Right ventricle myocardium superior (tissue), 1 donor: ENCODE measurements at regions of chr6 and their contacts with region 1.

Region 1: DNA sequence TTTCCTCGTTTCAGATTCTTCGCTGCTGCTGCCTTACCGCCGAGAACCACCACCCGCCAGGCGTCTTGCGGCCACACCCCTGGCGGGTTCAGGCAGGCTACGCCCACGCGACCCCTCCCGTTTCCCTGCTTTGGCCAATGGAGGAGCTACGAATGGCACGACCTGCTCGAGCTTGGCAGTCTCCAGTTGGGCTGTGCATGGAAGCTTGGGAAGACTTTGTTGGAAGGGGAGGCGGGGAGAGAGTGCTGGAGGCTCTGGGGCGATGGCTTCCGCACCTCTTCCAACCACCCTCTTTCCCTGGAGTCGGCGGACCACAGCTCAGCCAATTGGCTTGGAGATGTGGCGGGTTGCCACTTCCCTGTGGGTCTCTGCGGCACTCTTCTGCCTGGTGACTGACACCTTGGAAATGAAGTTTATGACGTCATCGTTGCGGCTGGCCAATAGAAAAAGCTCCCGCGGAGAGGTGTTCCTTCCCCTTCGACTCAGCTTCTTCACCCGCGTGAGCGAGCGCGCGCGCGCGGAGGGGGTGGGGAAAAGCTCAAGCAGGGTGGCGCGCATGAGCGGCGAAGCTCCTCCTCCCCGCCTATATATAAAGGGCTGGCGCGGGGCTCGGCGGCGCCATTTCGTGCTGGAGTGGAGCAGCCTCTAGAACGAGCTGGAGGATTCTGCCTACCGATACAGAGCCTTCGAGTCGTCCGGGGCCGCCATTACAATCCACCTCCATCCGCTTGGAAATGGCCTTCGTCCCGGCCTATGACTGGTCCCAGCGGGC is 3.4 kb downstream of the BRD2 start:
- DNase-seq: peak; percentile 99
- ATAC-seq: peak; percentile 61

Region 2: DNA sequence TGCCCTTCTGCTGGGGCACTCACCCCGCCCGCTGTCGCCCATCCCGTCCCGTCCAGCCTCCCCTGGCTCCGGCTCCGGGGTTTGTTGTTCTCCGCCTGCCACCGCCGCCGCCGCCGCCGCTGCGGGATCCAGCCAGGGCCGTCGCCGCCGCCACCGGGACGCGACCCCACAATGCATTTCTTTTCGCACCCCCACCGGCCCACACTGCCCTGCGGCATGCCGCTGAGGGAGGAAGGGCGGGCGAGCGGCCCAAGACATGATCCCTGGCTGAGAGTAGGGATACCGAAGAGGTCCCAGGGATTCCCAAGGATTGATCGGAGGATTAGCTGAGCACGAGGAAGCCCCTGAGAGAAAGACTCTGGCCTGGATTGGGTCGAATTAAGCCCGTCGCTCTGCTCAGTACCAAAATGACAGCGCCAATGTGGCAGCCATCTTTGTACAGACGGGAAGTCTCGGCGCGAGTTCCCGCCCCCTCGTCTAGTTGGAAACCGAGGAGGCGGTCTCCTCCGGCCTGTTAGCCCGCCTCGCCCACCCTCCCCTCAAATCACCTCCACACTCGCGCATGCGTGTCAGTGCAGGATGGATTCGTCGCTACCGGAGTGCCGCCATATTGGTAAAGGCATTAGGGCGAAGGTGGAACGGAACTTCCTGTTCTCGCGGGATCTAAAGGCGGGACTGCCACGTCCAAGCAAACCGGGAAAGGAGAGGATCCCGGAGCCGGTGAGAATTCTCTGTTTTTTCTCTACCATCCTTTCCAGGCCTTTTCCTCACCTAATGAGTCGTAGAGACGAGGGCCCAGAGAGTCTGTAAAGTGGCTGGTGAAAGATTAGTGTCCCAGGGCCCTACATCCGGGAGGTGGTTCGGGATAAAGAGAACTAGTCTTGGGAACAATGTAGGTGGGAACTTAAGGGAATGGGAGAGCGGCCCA is 228.7 kb after region 1 on chr6 and contains the starts of genes RXRB and SLC39A7:
- intact Hi-C with region 1: loop called (anchors 5 kb)
- DNase-seq: peak; percentile 100
- ATAC-seq: peak; percentile 90
- total RNA-seq, gene RXRB: 37.9 TPM
- total RNA-seq, gene SLC39A7: 46.0 TPM